Activated naive CD4-positive, alpha-beta T cell treated with anti-CD3 and anti-CD28 coated beads for 36 hours (primary cell): ENCODE measurements at regions of chr3 and their contacts with region 1.

Region 1: GRCh38 chr3:106473576-106474475 is 605.0 kb upstream of the CBLB start:
- DNase-seq: peak; percentile 10
- H3K4me3 Mint-ChIP-seq: no peak overlapping the region
- H3K27ac Mint-ChIP-seq: peak overlapping the region; percentile 59
- H3K4me1 Mint-ChIP-seq: peaks cover 24% of the 10 kb centered on the region
- H3K27me3 Mint-ChIP-seq: no peaks in the 10 kb centered on the region

Region 2: GRCh38 chr3:106119614-106120082 is 354.2 kb before region 1 on chr3:
- CTCF ChIA-PET with region 1: no interaction called
- intact Hi-C with region 1: loop called (anchors 1 kb)
- DNase-seq: peak; percentile 57
- H3K4me3 Mint-ChIP-seq: no peak overlapping the region
- H3K27ac Mint-ChIP-seq: peak overlapping the region; percentile 73
- H3K4me1 Mint-ChIP-seq: peaks cover 28% of the 10 kb centered on the region
- H3K27me3 Mint-ChIP-seq: no peaks in the 10 kb centered on the region

Region 3: DNA sequence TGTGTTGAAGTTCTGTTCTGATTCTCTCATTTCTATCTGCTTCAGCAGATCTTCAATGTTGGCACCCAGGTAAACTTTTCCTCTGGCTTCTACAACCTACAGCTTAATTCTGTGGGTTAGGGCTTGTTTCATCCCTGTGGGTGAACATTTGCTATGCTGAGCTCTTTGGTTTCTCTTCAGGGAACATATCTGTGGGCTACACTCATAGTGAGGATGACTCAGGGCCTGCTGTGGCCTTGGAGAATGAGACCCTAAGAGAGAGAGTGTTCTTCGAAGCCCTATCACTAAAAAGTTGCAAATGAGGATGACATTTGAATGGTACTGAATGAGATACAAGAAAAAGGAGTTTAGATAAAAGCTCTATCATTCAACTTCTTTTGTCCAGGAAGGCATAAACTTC is 258.8 kb before region 1 on chr3:
- CTCF ChIA-PET with region 1: no interaction called
- intact Hi-C with region 1: loop called (anchors 5 kb)
- DNase-seq: peak; percentile 56
- H3K4me3 Mint-ChIP-seq: no peak overlapping the region
- H3K27ac Mint-ChIP-seq: peak overlapping the region; percentile 81
- H3K4me1 Mint-ChIP-seq: peaks cover 61% of the 10 kb centered on the region
- H3K27me3 Mint-ChIP-seq: no peaks in the 10 kb centered on the region

Region 4: DNA sequence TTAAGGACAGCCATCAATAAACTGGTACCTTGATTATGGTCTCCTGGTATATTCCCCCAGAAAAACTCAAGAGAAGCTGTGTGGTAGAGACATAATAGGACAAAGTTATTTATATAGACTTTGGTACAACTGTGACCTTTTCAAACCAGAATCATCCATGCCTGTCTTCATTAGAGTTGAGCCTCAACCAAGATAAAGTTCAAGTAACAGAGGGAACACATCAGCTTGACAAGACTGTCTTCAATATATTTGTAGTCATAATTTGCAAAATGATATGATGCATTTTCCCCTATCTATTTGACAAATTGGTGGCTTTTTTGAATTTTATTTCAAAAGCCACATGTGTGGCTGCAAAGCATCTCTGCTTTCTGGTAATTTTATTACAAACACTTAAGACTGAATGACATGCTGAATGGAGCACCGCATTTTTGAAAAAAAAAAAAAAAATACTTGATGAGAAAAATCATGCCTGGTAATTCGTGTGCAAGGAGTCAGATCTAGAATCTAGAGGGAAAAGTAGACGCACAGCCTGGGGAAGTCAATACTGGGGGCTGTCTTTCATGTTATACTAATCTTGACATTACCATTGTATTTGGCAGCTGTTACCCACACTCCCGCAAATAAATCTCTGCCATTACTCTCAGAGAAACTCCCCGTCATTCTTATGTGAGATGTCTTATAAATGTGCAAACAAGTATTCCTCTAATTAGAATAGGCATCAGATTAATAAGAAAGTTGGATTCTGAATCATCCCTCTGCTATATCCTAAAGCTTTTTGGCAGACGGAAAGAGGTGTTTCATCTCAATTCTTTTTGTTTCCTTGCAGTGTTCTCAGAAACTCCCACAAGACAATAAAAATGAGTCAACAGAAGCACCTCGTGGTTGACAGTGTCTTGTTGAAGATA is 50.3 kb before region 1 on chr3:
- CTCF ChIA-PET with region 1: no interaction called
- intact Hi-C with region 1: loop called (anchors 1 kb)
- DNase-seq: peak; percentile 55
- H3K4me3 Mint-ChIP-seq: no peak overlapping the region
- H3K27ac Mint-ChIP-seq: peak overlapping the region; percentile 80
- H3K4me1 Mint-ChIP-seq: peaks cover 46% of the 10 kb centered on the region
- H3K27me3 Mint-ChIP-seq: peaks cover 2% of the 10 kb centered on the region

Region 5: GRCh38 chr3:106522397-106522796 is 48.6 kb after region 1 on chr3:
- CTCF ChIA-PET with region 1: no interaction called
- intact Hi-C with region 1: no loop called
- DNase-seq: no peak
- H3K4me3 Mint-ChIP-seq: no peak overlapping the region
- H3K27ac Mint-ChIP-seq: no peak overlapping the region
- H3K4me1 Mint-ChIP-seq: peaks cover 13% of the 10 kb centered on the region
- H3K27me3 Mint-ChIP-seq: peaks cover 9% of the 10 kb centered on the region

Region 6: DNA sequence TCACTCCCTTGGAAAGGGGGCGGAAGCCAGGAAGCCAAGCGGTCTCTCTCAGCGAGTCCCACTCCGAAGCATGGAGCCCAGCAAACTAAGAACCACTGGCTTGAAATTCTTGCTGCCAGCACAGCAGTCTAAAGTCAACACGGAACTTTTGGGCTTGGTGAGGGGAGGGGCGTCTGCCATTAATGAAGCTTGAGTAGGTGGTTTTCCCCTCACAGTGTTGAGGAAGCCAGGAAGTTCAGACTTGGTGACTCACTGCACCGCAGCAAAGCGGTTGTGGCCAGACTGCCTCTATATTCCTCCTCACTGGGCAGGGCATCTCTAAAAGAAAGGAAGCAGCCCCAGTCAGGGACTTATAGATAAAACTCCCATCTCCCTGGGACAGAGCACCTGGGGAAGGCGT is 60.4 kb after region 1 on chr3:
- CTCF ChIA-PET with region 1: no interaction called
- intact Hi-C with region 1: loop called (anchors 1 kb)
- DNase-seq: peak; percentile 69
- H3K4me3 Mint-ChIP-seq: no peak overlapping the region
- H3K27ac Mint-ChIP-seq: no peak overlapping the region
- H3K4me1 Mint-ChIP-seq: peaks cover 15% of the 10 kb centered on the region
- H3K27me3 Mint-ChIP-seq: peaks cover 7% of the 10 kb centered on the region